ENCODE measurements at regions of chr6 and their contacts with region 1.

Region 1: GRCh38 chr6:169774347-169774746 is 22.9 kb downstream of the ERMARD start:
- DNase-seq: peak in 1 of 9 experiments; percentile 20
- ATAC-seq: no peak
- H3K4me3 ChIP-seq: no peak overlapping the region
- H3K4me3 Mint-ChIP-seq: no peak overlapping the region
- H3K27ac ChIP-seq: no peak overlapping the region
- H3K27ac Mint-ChIP-seq: no peak overlapping the region
- H3K4me1 ChIP-seq: no peaks in the 10 kb centered on the region
- H3K4me1 Mint-ChIP-seq: no peaks in the 10 kb centered on the region
- H3K27me3 ChIP-seq: no peaks in the 10 kb centered on the region
- H3K27me3 Mint-ChIP-seq: no peaks in the 10 kb centered on the region
- CTCF ChIP-seq: no peak

Region 2: GRCh38 chr6:168956884-168957730 is 817.2 kb before region 1 on chr6:
- CTCF ChIA-PET with region 1: no interaction called
- POLR2A ChIA-PET with region 1: no interaction called
- intact Hi-C with region 1: loop called in 1 of 2 experiments (anchors 5 kb)
- DNase-seq: peak in 8 of 9 experiments; percentile 7 to 66 (median 44)
- ATAC-seq: no peak
- H3K4me3 ChIP-seq: no peak overlapping the region
- H3K4me3 Mint-ChIP-seq: no peak overlapping the region
- H3K27ac ChIP-seq: no peak overlapping the region
- H3K27ac Mint-ChIP-seq: no peak overlapping the region
- H3K4me1 ChIP-seq: no peaks in the 10 kb centered on the region
- H3K4me1 Mint-ChIP-seq: no peaks in the 10 kb centered on the region
- H3K27me3 ChIP-seq: no peaks in the 10 kb centered on the region
- H3K27me3 Mint-ChIP-seq: peaks cover 41% of the 10 kb centered on the region
- CTCF ChIP-seq: peak; percentile 59

Region 3: GRCh38 chr6:169839898-169840631 is 65.7 kb after region 1 on chr6:
- CTCF ChIA-PET with region 1: no interaction called
- POLR2A ChIA-PET with region 1: no interaction called
- intact Hi-C with region 1: no loop called
- DNase-seq: peak in 1 of 9 experiments; percentile 36
- ATAC-seq: no peak
- H3K4me3 ChIP-seq: no peak overlapping the region
- H3K4me3 Mint-ChIP-seq: no peak overlapping the region
- H3K27ac ChIP-seq: no peak overlapping the region
- H3K27ac Mint-ChIP-seq: no peak overlapping the region
- H3K4me1 ChIP-seq: no peaks in the 10 kb centered on the region
- H3K4me1 Mint-ChIP-seq: no peaks in the 10 kb centered on the region
- H3K27me3 ChIP-seq: no peaks in the 10 kb centered on the region
- H3K27me3 Mint-ChIP-seq: peaks cover 7% of the 10 kb centered on the region
- CTCF ChIP-seq: no peak

Measured in CD8-positive, alpha-beta T cell (primary cell).